Activated naive CD4-positive, alpha-beta T cell treated with anti-CD3 and anti-CD28 coated beads for 36 hours (primary cell): ENCODE measurements at regions of chr13 and their contacts with region 1.

Region 1: DNA sequence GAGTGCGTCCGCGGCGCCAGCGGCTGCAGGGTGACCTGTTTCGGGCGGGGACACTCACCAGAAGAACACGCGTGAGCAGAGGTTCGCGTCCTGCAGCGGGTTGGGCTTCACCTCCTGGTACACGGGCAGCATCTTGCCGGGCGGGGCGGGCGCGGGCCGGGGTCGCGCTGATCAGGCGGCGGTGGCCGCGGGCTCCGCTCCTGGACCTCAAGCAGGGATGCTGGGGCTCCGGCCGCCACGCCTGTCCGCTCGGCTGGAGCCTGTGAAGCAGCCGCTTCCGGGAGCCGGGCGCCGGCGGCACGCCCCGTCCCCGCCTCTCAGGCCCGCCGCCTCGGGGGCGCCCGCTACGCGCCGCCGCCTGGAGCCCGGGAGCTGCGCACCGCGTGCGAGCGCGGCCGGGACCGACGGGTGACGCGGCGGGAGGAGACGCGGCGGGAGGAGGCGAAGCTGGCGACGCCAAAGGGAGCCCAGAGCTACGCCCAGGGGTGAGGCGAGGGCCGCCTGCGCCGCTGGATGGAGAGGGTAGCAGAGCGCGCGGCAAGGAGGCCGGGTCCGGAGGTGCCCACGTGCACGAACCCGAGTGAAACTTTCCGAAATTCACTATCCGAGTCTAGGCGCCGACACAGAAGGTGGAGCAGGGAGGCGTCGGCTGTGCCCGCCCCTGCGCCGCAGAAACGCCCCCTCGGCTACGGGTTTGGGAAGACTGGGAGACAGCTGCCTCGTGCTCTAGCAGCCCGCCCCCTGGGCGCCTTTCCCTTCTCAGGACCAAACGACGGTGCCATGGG is at the start of gene ABCC4:
- DNase-seq: peak; percentile 53
- H3K4me3 Mint-ChIP-seq: peak within 1 kb of the TSS; percentile 80
- H3K27ac Mint-ChIP-seq: peak within 1 kb of the TSS; percentile 51
- H3K4me1 Mint-ChIP-seq: peaks cover 39% of the 10 kb centered on the region
- H3K27me3 Mint-ChIP-seq: peaks cover 7% of the 10 kb centered on the region
- total RNA-seq, gene ABCC4: 8.0 to 8.1 TPM

Region 2: DNA sequence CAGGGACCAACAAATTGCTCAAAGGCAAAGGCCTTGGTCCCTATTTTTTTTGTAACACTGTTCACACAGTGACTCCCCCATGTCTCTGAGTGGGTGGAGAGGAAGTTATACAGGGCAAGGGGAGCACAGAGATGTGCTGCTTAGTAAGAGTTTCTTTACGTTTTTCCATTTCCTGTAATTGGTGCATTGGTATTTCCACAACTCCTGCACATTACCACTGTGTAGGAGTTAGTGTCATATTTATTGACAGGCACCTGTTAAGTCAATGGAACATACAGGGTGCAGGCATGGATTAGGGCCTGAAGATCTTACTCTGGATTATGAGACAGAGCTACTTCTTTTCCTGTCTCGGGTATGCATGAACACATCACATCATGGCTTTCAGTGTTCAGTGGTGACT is 634.2 kb before region 1 on chr13:
- CTCF ChIA-PET with region 1: no interaction called
- intact Hi-C with region 1: loop called (anchors 2 kb)
- DNase-seq: peak; percentile 32
- H3K4me3 Mint-ChIP-seq: no peak overlapping the region
- H3K27ac Mint-ChIP-seq: peak overlapping the region; percentile 82
- H3K4me1 Mint-ChIP-seq: peaks cover 35% of the 10 kb centered on the region
- H3K27me3 Mint-ChIP-seq: peaks cover 9% of the 10 kb centered on the region

Region 3: GRCh38 chr13:95275322-95276036 is 25.9 kb before region 1 on chr13:
- CTCF ChIA-PET with region 1: no interaction called
- intact Hi-C with region 1: loop called (anchors 2 kb)
- DNase-seq: no peak
- H3K4me3 Mint-ChIP-seq: no peak overlapping the region
- H3K27ac Mint-ChIP-seq: no peak overlapping the region
- H3K4me1 Mint-ChIP-seq: peaks cover 4% of the 10 kb centered on the region
- H3K27me3 Mint-ChIP-seq: no peaks in the 10 kb centered on the region

Region 4: DNA sequence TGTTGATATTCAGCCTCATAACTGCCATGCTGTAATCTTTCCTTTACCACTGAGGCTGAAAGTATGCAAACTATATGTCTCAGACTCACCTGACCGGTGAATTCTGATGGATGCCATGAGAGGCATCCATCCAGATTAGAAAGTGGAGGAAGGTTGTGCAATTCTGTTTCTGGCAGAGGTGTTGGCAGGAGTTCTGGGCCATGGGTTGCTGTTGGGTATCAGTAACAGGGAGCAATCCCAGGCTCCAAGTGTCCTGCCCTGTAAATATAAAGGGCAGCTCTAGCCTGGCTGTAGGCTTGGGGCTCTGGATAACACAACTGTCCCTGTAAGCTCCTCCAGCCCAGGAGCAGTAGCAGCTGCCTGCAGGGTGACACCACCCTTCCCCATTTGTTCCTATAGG is 77.2 kb after region 1 on chr13:
- CTCF ChIA-PET with region 1: interaction called, 55 read pairs
- intact Hi-C with region 1: loop called (anchors 1 kb)
- DNase-seq: no peak
- H3K4me3 Mint-ChIP-seq: no peak overlapping the region
- H3K27ac Mint-ChIP-seq: no peak overlapping the region
- H3K4me1 Mint-ChIP-seq: peaks cover 5% of the 10 kb centered on the region
- H3K27me3 Mint-ChIP-seq: no peaks in the 10 kb centered on the region

Region 5: GRCh38 chr13:95676762-95677563 is 375.6 kb after region 1 on chr13 and contains the start of gene DNAJC3:
- CTCF ChIA-PET with region 1: no interaction called
- intact Hi-C with region 1: loop called (anchors 2 kb)
- DNase-seq: peak; percentile 98
- H3K4me3 Mint-ChIP-seq: peak within 1 kb of the TSS; percentile 93
- H3K27ac Mint-ChIP-seq: peak within 1 kb of the TSS; percentile 86
- H3K4me1 Mint-ChIP-seq: peaks cover 53% of the 10 kb centered on the region
- H3K27me3 Mint-ChIP-seq: no peaks in the 10 kb centered on the region
- total RNA-seq, gene DNAJC3: 13.8 to 14.0 TPM